Vagina (tissue), 2 donors: ENCODE measurements at regions of chr3 and their contacts with region 1.

Region 1: DNA sequence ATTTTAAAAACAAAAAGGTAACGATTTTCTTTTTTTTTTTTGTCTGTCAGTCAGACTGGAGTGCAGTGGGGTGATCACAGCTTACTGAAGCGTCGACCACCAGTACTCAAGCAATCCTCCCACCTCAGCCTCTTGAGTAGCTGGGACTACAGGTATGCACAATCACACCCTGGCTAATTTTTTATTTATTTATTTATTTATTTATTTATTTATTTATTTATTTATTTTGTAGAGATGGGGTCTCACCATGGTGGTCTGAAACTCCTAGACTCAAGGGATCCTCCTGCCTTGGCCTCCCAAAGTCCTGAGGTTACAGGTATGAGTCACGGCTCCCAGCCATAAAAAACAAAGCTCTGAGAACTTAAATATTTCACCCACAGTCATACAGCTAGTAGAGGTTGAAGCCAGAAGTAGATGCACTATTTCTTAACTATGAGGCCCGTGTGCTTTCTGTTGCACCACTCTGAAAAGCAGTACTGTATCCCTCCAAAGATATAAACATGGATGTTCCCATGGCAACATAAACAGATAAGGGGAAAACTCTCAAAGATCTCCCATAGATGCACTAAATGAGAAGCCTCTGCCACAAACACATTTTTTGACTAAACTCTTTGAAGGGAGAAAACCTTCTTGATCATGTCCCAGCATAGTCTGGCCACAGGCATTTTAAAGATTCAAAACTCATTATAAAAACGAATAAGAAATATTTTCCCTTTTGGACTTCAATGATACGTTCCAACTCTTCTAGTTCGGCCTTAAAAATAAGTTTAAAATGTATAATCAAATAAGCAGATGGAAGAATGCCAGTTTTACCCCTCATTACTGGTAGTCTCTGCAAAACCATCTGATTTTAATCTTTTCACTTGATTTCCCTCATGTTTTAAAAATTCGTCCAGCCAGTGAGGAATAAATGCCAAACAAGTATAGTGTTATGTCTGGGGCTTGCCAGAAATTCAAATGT is 162.3 kb upstream of the ARHGEF26 start:
- DNase-seq: no peak
- H3K4me3 ChIP-seq: no peak overlapping the region
- H3K27ac ChIP-seq: no peak overlapping the region
- H3K4me1 ChIP-seq: peaks cover 17% of the 10 kb centered on the region
- H3K27me3 ChIP-seq: no peaks in the 10 kb centered on the region
- CTCF ChIP-seq: no peak
- POLR2A ChIP-seq: no peak

Region 2: DNA sequence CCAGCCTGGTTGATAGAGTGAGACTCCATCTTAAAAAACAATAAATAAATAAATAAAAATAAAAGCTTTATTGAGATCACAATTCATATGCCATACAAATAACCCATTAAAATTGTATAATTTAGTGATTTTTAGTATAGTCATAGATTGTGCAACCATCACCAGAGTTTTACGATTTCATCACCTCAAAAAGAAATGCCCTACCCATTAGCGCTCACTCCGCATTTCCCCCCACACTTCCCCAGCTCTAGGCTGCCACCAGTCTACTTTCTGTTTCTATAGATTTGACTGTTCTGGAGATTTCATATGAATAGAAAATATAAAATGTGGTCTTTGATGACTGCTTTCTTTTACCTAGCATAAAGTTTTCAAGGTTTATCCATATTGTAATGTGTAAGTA is 219.3 kb after region 1 on chr3:
- intact Hi-C with region 1: no loop called
- DNase-seq: no peak
- H3K4me3 ChIP-seq: no peak overlapping the region
- H3K27ac ChIP-seq: no peak overlapping the region
- H3K4me1 ChIP-seq: peaks cover 17% of the 10 kb centered on the region
- H3K27me3 ChIP-seq: no peaks in the 10 kb centered on the region
- CTCF ChIP-seq: no peak
- POLR2A ChIP-seq: no peak

Region 3: DNA sequence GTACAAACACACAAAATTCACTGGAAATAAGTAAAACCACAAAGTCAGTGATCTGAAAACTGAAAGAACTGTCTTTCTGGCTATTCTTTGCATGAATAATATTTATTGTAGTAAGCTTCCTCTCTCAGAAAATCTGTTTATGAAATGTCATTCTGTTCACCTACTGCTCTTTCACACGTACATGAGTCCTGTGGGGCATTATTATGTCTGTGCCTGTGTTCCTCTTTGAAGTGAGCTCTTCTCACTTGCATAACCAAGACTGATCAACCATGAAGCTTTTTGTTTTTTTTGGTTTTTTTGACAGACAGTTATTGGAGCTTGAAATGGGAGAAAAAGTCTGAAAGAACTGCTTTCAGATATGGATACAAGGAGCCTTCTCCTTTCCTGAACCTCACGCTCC is 1590.2 kb after region 1 on chr3:
- intact Hi-C with region 1: loop called (anchors 10 kb)
- DNase-seq: no peak
- H3K4me3 ChIP-seq: no peak overlapping the region
- H3K27ac ChIP-seq: no peak overlapping the region
- H3K4me1 ChIP-seq: no peaks in the 10 kb centered on the region
- H3K27me3 ChIP-seq: no peaks in the 10 kb centered on the region
- CTCF ChIP-seq: no peak
- POLR2A ChIP-seq: no peak